ENCODE measurements at regions of chr21 and their contacts with region 1.

Region 1: GRCh38 chr21:41283211-41283818 is 33.3 kb upstream of the FAM3B start:
- DNase-seq: peak in 3 of 10 donors; percentile 30 to 53 (median 36)

Region 2: DNA sequence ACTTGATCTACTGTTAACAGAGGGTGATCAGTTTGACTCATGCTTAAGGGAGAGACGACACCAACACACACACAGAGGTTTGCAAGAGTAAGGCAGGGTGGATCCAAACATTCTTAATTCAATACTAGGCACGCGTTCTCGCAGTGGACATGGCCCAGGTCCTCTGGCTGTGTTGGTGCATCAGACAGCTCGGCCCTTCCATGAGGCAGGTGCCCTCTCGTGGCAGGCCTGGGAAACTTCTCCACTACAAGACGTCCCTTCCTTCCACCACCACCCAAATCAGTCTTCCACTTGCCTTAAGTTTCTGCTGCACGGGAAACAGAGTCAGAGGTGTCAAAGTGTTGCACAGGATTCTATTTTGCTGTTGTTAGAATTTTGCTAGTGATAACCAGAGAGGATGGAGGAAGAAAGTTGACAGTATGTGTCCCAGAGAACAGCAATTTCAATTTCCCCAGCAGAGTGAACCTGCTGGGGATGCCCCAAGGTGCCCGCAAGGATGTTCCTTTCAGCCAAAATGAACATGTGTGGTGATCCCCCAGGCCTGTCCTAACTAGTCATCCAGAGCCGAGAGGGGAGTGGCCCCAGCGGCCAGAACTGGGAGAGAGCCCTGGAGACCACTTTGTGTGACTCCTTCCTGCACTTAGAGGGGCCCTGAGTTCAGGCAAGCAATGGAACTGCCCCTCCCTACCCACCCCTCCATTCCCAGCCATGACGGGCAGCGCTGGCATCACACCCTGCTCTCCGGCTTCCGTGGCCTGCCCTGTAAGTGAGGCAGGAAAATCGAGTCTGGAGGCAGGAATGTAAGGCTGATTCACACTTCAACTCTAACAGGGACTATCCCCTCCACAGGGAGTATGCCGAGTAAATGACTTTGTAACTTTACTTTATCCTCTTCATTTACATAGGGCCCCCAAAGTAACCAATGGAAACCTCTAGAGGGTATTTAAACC is 177.5 kb after region 1 on chr21:
- intact Hi-C with region 1: loop called (anchors 2 kb)
- DNase-seq: peak; percentile 47 to 95 (median 66)

Region 3: GRCh38 chr21:41777951-41778874 is 494.9 kb after region 1 on chr21:
- intact Hi-C with region 1: loop called (anchors 2 kb)
- DNase-seq: peak; percentile 65 to 97 (median 85)

Measured in posterior cingulate gyrus (tissue), 11 donors.